Calu3 (cell line): ENCODE measurements at regions of chr12 and their contacts with region 1.

Region 1: DNA sequence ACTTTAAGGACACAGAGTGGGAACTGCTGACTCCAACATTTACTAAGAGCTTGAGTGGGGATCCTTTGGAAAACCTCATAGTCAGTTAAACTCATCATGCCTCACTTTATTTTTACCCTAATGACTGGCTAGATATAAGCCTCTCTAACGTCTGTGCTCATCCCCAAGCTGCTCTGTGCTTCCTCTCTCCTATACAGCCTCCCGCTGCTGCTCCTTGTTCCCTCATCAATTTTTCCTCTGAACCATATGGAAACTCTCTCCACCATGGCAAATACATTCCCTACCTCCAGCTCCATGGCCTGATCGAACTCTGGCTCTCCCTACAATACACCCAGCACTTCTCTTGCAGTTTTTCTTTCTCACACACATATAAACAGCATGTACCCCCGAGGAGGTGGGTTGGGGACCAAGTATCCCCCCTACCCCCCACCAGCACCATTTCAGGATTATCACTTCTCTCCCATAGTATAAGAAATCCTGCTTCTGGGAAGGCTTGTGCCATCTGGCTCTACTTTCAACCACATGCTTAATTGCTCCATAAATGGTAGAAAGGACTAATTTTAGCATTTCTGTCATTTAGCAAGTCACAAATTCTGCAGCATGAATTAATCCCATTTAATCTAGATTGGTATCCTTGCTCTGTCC is 39.2 kb upstream of the DYRK2 start:
- DNase-seq: no peak
- H3K4me3 Mint-ChIP-seq: no peak overlapping the region
- H3K27ac Mint-ChIP-seq: no peak overlapping the region
- H3K4me1 Mint-ChIP-seq: no peaks in the 10 kb centered on the region
- H3K27me3 Mint-ChIP-seq: no peaks in the 10 kb centered on the region
- CTCF ChIP-seq: no peak

Region 2: GRCh38 chr12:67633708-67634107 is 24.4 kb after region 1 on chr12:
- CTCF ChIA-PET with region 1: interaction called, 3 read pairs
- intact Hi-C with region 1: loop called (anchors 1 kb)
- DNase-seq: no peak
- H3K4me3 Mint-ChIP-seq: no peak overlapping the region
- H3K27ac Mint-ChIP-seq: no peak overlapping the region
- H3K4me1 Mint-ChIP-seq: peaks cover 9% of the 10 kb centered on the region
- H3K27me3 Mint-ChIP-seq: no peaks in the 10 kb centered on the region
- CTCF ChIP-seq: no peak